ENCODE measurements at regions of chr14 and their contacts with region 1.

Region 1: GRCh38 chr14:105700622-105701288 is 174.4 kb downstream of the TMEM121 start:
- DNase-seq: no peak
- H3K4me3 ChIP-seq: no peak overlapping the region
- H3K4me1 ChIP-seq: no peaks in the 10 kb centered on the region
- H3K27me3 ChIP-seq: no peaks in the 10 kb centered on the region

Region 2: GRCh38 chr14:105581551-105582341 is 119.0 kb before region 1 on chr14:
- in situ Hi-C with region 1: loop called (anchors 10 kb)
- DNase-seq: no peak
- H3K4me3 ChIP-seq: no peak overlapping the region
- H3K4me1 ChIP-seq: no peaks in the 10 kb centered on the region
- H3K27me3 ChIP-seq: no peaks in the 10 kb centered on the region

Region 3: GRCh38 chr14:105776924-105777323 is 76.2 kb after region 1 on chr14:
- in situ Hi-C with region 1: no loop called
- DNase-seq: no peak
- H3K4me3 ChIP-seq: no peak overlapping the region
- H3K4me1 ChIP-seq: no peaks in the 10 kb centered on the region
- H3K27me3 ChIP-seq: no peaks in the 10 kb centered on the region

Region 4: GRCh38 chr14:106268013-106268727 is 567.4 kb after region 1 on chr14:
- in situ Hi-C with region 1: no loop called
- DNase-seq: peak in 1 of 2 experiments; percentile 72
- H3K4me3 ChIP-seq: no peak overlapping the region
- H3K4me1 ChIP-seq: no peaks in the 10 kb centered on the region
- H3K27me3 ChIP-seq: no peaks in the 10 kb centered on the region